ENCODE measurements at regions of chr12 and their contacts with region 1.

Region 1: DNA sequence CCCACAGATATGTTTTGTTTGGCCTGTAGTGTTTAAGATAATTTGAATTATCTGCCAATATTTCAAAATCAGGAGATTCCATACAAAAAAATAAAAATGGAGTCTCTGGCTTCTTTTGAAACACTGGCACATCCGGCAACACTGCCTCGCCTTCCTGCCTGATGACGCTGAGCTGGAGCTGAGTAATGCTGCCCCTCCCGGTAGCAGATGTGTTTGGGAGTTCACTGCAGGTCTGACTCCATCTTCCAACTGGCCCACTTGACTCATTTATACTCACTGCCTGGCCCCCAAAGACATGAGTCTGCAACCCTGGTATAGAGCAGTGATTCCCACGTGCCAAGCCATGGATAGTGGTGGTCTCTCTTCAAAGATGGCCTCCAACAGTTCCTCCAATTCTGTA is 7.4 kb downstream of the CIT start:
- DNase-seq: peak; percentile 80
- ATAC-seq: peak; percentile 92
- H3K4me3 ChIP-seq: no peak overlapping the region
- H3K27ac ChIP-seq: peak overlapping the region; percentile 72
- H3K4me1 ChIP-seq: peaks cover 13% of the 10 kb centered on the region
- H3K27me3 ChIP-seq: no peaks in the 10 kb centered on the region
- CTCF ChIP-seq: peak; percentile 0; the same call in 1 of the 2 replicates

Region 2: DNA sequence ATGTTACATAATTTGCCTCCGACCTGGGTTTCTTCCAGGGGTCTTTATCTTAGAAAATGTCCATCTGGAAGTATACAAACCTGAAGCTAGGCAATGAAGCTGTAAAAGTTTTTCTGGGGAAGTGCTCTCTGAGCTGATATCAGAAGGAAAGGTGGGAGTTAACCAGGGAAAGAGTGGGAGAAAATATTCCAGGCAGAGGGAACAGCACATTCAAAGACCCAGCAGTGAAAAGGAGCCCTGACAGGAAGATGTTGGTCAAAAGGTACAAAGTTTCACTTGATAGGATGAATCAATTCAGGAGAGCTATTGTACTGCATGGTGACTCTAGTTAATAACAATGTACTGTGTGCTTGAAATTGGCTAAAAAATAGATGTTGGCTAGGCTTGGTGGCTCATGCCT is 25.2 kb after region 1 on chr12:
- CTCF ChIA-PET with region 1: interaction called, 12 read pairs
- POLR2A ChIA-PET with region 1: no interaction called
- intact Hi-C with region 1: no loop called
- DNase-seq: no peak
- ATAC-seq: no peak
- H3K4me3 ChIP-seq: no peak overlapping the region
- H3K27ac ChIP-seq: no peak overlapping the region
- H3K4me1 ChIP-seq: peaks cover 5% of the 10 kb centered on the region
- H3K27me3 ChIP-seq: no peaks in the 10 kb centered on the region
- CTCF ChIP-seq: no peak

Region 3: DNA sequence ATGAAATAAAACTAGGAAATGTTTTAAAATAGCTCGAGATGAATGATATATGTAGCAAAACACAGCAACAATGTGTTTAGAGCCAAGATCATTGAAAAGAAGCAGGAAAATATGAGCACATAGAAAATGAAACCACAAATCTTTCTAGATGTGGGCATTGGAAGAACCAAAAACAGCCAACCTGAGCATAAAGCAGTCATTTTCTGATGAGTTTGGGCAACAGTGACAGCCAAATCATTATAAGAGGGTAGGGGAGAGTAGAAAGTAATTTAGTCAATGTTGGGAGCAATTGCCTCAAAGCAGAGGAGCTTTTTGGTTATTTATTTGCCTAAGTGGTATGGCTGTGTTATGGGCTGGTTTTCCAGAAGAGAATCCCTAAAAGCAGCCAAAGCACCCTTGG is 110.5 kb after region 1 on chr12:
- CTCF ChIA-PET with region 1: interaction called, 12 read pairs
- POLR2A ChIA-PET with region 1: no interaction called
- intact Hi-C with region 1: no loop called
- DNase-seq: no peak
- ATAC-seq: no peak
- H3K4me3 ChIP-seq: no peak overlapping the region
- H3K27ac ChIP-seq: no peak overlapping the region
- H3K4me1 ChIP-seq: no peaks in the 10 kb centered on the region
- H3K27me3 ChIP-seq: peaks cover 31% of the 10 kb centered on the region
- CTCF ChIP-seq: no peak